Naive thymus-derived CD8-positive, alpha-beta T cell (primary cell): ENCODE measurements at regions of chr11 and their contacts with region 1.

Region 1: DNA sequence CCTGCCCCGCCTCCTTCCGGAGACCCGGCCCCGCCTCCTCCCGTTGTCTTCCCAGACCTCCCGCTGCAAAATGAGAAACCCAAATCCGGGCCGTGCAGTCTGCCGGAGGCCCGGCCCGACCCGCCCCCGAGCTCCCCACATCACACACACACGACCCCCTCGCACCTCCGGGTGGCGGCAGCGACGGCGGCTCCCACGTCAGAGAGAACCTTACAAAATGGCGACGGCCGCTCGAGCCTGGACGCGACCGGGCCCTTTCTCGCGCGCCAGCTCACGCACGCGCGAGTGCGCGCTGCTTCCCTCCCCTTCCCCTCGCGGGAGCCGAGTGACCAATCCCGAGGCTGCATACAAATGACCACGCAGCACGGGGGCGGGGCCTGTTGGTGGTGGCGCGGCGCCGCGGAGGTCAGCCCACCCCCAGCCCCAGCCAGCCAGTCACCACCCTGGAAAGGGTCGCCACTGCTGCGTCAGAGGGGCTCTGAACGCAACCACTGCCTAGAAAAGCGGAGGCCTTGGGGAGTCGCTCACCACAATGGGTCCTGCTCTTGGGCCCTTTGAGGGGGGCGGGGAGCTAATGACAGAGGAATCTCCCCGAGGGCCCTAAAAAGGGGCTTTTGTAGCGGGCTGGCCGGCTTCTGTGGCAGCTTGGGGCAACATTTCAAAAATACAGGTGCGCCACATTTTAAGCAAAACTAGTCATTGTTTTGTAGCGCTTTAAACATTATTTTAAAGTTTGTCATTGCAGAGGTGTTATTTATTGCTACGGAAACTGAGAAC is at the start of gene RBM4B:
- DNase-seq: peak; percentile 93 to 98 (median 96)
- ATAC-seq: peak; percentile 83 to 84
- H3K4me3 Mint-ChIP-seq: peak within 1 kb of the TSS; percentile 85 to 98 (median 96)
- H3K27ac Mint-ChIP-seq: peak within 1 kb of the TSS; percentile 95 to 100 (median 99)
- H3K4me1 Mint-ChIP-seq: peaks cover 21 to 48% (median 42%) of the 10 kb centered on the region in 4 donors
- H3K27me3 Mint-ChIP-seq: no peaks in the 10 kb centered on the region
- polyA plus RNA-seq, gene RBM4B: 7.7 to 12.3 (median 10.8) TPM

Region 2: DNA sequence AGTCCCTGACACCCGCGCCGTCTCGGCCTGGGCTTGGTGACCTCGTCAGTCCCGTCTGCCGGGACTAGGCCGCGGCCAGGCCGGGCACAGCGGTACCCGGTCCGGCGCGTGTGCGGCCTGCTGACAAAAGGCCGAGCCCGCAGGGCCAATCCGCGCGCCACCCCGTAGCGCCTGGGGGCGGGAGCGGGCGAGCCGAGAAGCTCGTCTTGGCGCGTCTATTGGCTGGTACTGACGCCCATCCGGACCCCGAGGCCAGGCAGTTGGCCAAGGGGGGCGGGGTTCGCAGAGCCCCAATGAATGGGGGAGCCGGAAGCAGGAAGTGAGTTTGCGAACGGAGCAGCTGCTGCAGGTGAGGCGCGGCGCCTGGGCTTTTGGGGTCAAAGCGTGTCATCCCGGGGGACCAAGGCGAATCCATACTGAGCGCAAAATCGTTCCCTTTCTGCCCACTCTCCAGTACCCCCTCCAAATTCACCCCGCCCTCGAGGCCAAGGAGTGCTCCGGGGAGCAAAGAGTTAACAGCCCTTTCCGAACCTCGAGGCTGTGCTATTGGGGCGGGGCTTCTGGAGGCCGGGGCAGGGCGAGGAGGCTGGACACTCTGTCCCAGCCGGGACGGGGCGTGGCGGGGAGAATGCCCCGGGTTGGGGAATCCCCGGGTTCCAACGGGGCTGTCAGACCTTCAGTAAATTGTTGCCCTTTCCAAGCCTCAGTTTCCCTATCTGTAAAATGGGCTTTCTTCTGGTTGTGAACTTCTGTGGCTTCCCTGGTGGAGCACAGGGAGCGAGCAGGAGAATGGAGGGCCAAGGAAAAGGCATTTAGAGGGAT is 197.5 kb before region 1 on chr11 and contains the start of gene DPP3:
- POLR2A ChIA-PET with region 1: interaction called, 12 read pairs
- DNase-seq: peak; percentile 92 to 97 (median 95)
- ATAC-seq: peak; percentile 98 to 99
- H3K4me3 Mint-ChIP-seq: peak within 1 kb of the TSS; percentile 86 to 94 (median 92)
- H3K27ac Mint-ChIP-seq: peak within 1 kb of the TSS; percentile 80 to 96 (median 92)
- H3K4me1 Mint-ChIP-seq: peaks cover 17 to 34% (median 30%) of the 10 kb centered on the region in 4 donors
- H3K27me3 Mint-ChIP-seq: no peaks in the 10 kb centered on the region
- polyA plus RNA-seq, gene DPP3: 20.0 to 25.4 (median 20.5) TPM

Region 3: GRCh38 chr11:66568124-66568916 is 109.5 kb before region 1 on chr11 and contains the start of gene CTSF:
- POLR2A ChIA-PET with region 1: interaction called, 26 read pairs
- DNase-seq: peak; percentile 50 to 89 (median 68)
- ATAC-seq: peak; percentile 94 to 99
- H3K4me3 Mint-ChIP-seq: peak within 1 kb of the TSS; percentile 75 to 89 (median 86)
- H3K27ac Mint-ChIP-seq: peak within 1 kb of the TSS in 9 of 10 donors; percentile 66 to 95 (median 87)
- H3K4me1 Mint-ChIP-seq: peaks cover 0 to 18% (median 10%) of the 10 kb centered on the region in 4 donors
- H3K27me3 Mint-ChIP-seq: peaks cover 0 to 2% (median 0%) of the 10 kb centered on the region in 5 donors
- polyA plus RNA-seq, gene CTSF: 25.1 to 40.9 (median 25.4) TPM

Region 4: DNA sequence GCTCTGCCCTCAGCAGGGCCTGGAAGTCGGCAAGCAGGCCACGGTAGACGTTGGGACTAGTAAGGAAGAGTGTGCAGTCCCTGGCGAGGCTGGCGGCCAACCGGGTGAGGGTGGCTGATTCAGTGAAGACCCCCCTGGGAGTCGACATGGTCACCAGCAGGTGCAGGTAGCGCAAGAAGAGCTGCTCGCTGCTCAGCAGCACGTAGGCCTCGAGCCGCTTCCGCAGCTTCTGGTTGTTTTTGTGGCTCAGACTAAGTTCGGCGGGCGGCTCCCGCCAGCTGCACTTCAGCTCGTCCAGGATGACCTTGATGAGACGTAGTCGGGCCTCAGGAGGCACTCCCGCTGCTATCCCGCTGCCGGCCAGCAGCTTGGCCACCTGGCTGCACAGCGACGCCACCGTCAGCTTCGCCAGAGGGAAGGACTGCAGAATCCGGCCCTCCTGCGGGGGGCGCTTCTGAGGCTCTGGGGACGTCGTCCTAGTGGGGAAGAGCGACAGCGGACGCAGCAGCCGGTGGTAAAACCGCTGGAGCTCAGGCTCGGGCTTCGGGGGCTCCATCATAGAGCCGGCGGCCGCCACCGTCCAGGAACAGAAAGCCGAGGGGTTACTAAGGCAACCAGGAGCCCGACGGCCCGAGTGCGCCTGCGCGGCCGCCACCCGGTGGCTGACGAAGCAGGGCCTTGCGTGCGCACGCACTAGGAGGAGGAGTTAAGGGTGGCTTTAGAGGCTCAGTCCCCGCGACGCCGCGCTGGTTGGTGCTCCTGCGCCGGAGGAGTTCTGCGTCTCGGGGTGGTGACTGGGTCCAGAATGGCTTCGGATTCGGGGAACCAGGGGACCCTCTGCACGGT is 85.1 kb before region 1 on chr11 and contains the starts of genes CCDC87 and CCS:
- POLR2A ChIA-PET with region 1: interaction called, 18 read pairs
- DNase-seq: peak; percentile 94 to 100 (median 98)
- ATAC-seq: peak; percentile 94 to 96
- H3K4me3 Mint-ChIP-seq: peak within 1 kb of the TSS; percentile 88 to 100 (median 100)
- H3K27ac Mint-ChIP-seq: peak within 1 kb of the TSS; percentile 94 to 100 (median 100)
- H3K4me1 Mint-ChIP-seq: peaks cover 19 to 46% (median 37%) of the 10 kb centered on the region in 4 donors
- H3K27me3 Mint-ChIP-seq: no peaks in the 10 kb centered on the region
- polyA plus RNA-seq, gene CCDC87: not detected
- polyA plus RNA-seq, gene CCS: 39.2 to 53.4 (median 46.6) TPM

Region 5: GRCh38 chr11:66638177-66639065 is 39.4 kb before region 1 on chr11 and contains the start of gene RBM4:
- POLR2A ChIA-PET with region 1: interaction called, 51 read pairs
- DNase-seq: peak; percentile 84 to 99 (median 98)
- ATAC-seq: peak; percentile 84 to 90
- H3K4me3 Mint-ChIP-seq: peak within 1 kb of the TSS; percentile 89 to 99 (median 95)
- H3K27ac Mint-ChIP-seq: peak within 1 kb of the TSS; percentile 89 to 99 (median 97)
- H3K4me1 Mint-ChIP-seq: peaks cover 36 to 73% (median 69%) of the 10 kb centered on the region in 4 donors
- H3K27me3 Mint-ChIP-seq: no peaks in the 10 kb centered on the region
- polyA plus RNA-seq, gene RBM4: 250 to 283 (median 262) TPM

Region 6: GRCh38 chr11:66663741-66664296 is 14.0 kb before region 1 on chr11:
- POLR2A ChIA-PET with region 1: interaction called, 16 read pairs
- DNase-seq: no peak
- ATAC-seq: no peak
- H3K4me3 Mint-ChIP-seq: no peak overlapping the region
- H3K27ac Mint-ChIP-seq: peak overlapping the region in 4 of 10 donors; percentile 7 to 88 (median 53)
- H3K4me1 Mint-ChIP-seq: peaks cover 16 to 55% (median 41%) of the 10 kb centered on the region in 4 donors
- H3K27me3 Mint-ChIP-seq: no peaks in the 10 kb centered on the region